ENCODE measurements at regions of chr1 and their contacts with region 1.

Region 1: DNA sequence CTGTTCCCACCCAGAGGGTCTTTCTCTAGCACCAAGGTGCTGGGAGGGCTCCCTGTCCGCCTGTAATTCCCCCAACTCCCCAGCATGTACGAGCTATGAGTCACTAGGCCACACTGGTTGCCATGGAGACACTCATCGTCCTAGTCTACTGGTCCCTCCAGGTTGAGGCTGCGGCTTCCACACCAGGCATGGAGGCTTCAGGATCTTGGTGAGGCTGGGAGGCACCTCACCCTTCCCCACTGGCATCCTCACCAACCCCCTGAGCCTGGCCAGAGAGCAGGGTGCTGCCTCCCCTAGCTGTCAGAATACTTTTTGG is 75.6 kb upstream of the KAZN start:
- DNase-seq: no peak
- H3K4me3 ChIP-seq: no peak overlapping the region
- H3K27ac ChIP-seq: peak overlapping the region; percentile 55 to 77 (median 64)
- H3K4me1 ChIP-seq: peaks cover 0 to 62% (median 51%) of the 10 kb centered on the region in 4 donors
- H3K27me3 ChIP-seq: no peaks in the 10 kb centered on the region
- CTCF ChIP-seq: no peak
- EP300 ChIP-seq: no peak
- POLR2A ChIP-seq: no peak

Region 2: DNA sequence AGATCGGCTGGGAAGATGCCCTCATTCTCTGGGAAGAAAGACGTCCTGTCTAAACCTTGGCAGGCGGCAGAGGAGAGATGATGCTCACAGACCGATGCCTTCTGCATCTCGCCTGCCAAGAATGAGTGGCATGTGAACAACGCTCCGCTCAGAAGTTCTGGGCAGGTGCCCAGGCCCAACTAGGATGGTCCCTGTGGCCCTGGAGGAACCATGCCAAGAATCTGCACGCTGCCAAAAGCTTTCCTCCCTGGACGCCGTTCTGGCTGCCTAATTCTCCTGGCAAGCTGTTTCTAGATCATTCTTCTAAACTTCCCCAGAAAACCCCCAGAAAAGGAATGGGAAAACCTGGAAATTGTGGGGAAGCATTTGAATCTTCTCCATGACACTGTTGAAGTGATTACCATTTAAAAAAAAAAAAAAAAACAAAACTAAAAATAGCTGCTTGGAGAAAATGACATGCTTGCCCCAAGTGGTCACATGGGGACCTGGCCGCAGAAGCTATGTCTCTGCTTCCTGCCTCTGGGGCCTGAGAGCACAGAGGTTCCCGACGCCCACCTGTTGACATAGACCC is 382.0 kb before region 1 on chr1:
- intact Hi-C with region 1: loop called (anchors 5 kb)
- DNase-seq: peak; percentile 91
- H3K4me3 ChIP-seq: no peak overlapping the region
- H3K27ac ChIP-seq: peak overlapping the region; percentile 53 to 69 (median 67)
- H3K4me1 ChIP-seq: peaks cover 15 to 31% (median 29%) of the 10 kb centered on the region in 4 donors
- H3K27me3 ChIP-seq: no peaks in the 10 kb centered on the region
- CTCF ChIP-seq: peak in 1 of 3 experiments; percentile 20
- EP300 ChIP-seq: no peak
- POLR2A ChIP-seq: no peak

Region 3: DNA sequence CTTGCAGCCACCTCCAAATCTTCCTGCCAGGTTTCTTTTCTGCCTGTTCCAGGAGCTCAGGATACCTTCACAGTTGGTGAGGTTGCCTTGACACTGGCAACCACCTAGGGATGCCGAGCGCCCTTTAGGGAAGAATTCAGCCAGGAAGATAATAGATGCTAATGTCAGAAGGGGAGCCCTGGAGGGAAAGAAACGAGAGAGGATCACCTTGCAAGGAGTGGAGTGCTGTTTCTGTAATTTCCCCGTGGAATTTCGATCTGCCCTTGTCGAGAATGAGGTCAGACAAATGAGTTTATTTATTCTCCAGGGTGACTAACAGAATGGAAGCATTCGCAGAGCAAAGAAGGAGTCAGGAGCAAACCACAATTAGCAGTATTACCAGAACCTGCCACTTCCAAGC is 240.2 kb before region 1 on chr1:
- intact Hi-C with region 1: no loop called
- DNase-seq: no peak
- H3K4me3 ChIP-seq: no peak overlapping the region
- H3K27ac ChIP-seq: no peak overlapping the region
- H3K4me1 ChIP-seq: no peaks in the 10 kb centered on the region
- H3K27me3 ChIP-seq: no peaks in the 10 kb centered on the region
- CTCF ChIP-seq: no peak
- EP300 ChIP-seq: no peak
- POLR2A ChIP-seq: no peak

Region 4: GRCh38 chr1:14626869-14627607 is 104.2 kb after region 1 on chr1:
- intact Hi-C with region 1: no loop called
- DNase-seq: no peak
- H3K4me3 ChIP-seq: no peak overlapping the region
- H3K27ac ChIP-seq: peak overlapping the region in 2 of 4 donors; percentile 22 to 41
- H3K4me1 ChIP-seq: peaks cover 0 to 23% (median 16%) of the 10 kb centered on the region in 4 donors
- H3K27me3 ChIP-seq: no peaks in the 10 kb centered on the region
- CTCF ChIP-seq: no peak
- EP300 ChIP-seq: no peak
- POLR2A ChIP-seq: no peak